ENCODE measurements at regions of chr5 and their contacts with region 1.

Region 1: DNA sequence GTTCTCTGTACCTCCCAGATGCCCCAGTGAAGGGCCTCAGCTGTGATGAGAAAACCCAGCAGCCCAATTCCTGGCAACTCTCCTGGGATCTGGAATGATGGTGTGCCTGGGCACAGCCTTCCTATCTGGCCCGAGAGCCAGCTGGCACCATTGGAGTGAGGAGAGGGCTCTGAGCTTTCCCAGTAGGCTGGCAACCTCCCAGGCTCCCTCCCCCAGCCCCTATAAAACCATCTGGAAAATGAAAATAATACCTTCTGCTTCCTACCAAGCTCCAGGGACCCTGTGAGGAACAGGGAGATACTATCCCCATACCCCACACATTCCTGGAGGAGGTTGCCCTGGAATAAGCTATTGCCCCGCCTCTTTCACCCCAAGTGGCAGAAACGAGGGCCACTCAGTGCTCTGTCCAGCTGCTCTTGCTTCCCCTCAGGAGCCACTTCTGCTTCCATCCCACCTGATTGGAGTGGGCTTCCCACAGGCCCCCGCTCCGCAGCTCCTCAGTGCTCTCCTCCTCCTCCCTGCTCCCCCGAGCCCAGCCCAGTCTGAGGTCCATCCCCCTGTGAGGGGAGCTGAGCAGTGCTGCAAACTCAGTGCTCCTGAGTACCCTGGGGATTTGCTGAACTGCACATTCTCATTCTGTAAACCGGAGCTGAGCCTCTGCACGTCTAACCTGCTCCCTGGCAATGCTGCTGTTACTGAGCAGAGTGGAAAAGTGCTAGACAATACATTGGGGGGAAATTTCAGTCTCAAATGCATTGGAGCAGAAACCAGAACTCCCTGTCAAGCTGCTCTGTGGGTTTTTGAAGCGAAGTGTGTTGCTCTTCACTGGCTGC is 74.7 kb downstream of the THBS4 start:
- DNase-seq: no peak

Region 2: DNA sequence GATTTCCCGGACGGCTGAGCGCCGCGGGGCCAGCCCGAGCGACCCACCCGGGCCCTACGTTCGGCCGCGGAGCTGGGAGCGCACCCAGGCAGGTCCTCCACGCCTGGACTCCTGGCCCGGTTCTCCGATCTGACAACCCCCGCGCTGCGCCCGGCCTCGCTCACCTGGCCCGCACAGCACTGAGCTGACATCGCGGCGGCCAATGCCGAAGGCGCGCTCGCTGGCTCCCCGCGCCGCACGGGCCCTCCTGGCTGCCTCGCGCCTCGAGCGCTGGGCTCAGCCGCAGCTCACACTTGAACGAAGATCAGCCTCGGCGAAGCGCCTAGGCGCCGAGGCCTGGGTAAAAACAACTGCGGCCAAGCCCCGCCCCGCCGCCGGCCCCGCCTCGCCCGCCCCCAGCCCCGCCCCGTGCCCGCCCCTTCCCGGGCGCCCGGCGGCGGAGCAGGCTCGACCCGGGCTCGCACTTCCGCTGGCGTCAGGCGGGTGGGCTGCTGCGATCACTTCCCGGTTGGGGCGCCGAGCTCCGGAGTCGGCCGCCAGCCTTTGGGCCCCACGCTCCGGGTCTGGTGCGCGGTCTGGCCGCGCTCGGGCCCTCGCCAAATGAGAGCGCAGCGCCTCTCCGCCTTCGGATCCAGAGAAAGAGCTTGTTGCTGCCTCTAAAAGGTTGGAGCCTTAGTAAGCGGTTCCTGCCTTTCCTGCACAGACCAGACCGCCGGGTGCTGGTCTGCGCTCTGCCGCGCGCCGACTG is 146.0 kb after region 1 on chr5 and contains the start of gene SERINC5:
- in situ Hi-C with region 1: loop called (anchors 25 kb)
- DNase-seq: peak; percentile 83